Activated CD4-positive, alpha-beta T cell treated with anti-CD3 and anti-CD28 coated beads, Interleukin-2, amount 10 ng/mL, durations not matched to agents 24 days and 14 days (primary cell): ENCODE measurements at regions of chr2 and their contacts with region 1.

Region 1: GRCh38 chr2:203535078-203535783 is at the start of gene RAPH1:
- DNase-seq: peak; percentile 88
- H3K4me3 Mint-ChIP-seq: peak within 1 kb of the TSS; percentile 87
- H3K27ac Mint-ChIP-seq: peak within 1 kb of the TSS; percentile 91
- H3K4me1 Mint-ChIP-seq: peaks cover 28% of the 10 kb centered on the region
- H3K27me3 Mint-ChIP-seq: peaks cover 57% of the 10 kb centered on the region
- total RNA-seq, gene RAPH1: 6.0 and 6.1 TPM in 2 replicates

Region 2: DNA sequence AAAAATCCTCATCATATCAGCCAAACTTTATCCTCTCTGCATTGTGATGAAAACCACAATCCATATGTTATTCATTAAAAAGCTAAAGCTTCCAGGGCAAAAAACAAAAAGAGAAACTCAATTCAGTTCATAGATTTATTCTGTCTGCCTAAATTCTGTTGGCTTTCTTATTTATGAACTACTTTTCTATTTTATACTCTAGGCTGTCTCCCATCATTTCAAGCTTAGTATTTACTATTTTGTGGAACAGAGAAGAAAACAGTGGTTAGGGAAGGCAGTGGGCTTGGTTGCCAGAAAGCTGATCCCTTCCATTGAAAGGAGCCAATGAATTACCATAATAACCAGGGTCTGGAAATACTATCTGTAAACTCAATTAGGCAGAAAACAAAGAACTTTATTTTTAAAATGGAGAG is 72.0 kb before region 1 on chr2:
- intact Hi-C with region 1: no loop called
- DNase-seq: no peak
- H3K4me3 Mint-ChIP-seq: no peak overlapping the region
- H3K27ac Mint-ChIP-seq: no peak overlapping the region
- H3K4me1 Mint-ChIP-seq: no peaks in the 10 kb centered on the region
- H3K27me3 Mint-ChIP-seq: peaks cover 2% of the 10 kb centered on the region

Region 3: GRCh38 chr2:203492965-203493364 is 42.3 kb before region 1 on chr2:
- intact Hi-C with region 1: loop called (anchors 5 kb)
- DNase-seq: peak; percentile 41
- H3K4me3 Mint-ChIP-seq: no peak overlapping the region
- H3K27ac Mint-ChIP-seq: no peak overlapping the region
- H3K4me1 Mint-ChIP-seq: peaks cover 7% of the 10 kb centered on the region
- H3K27me3 Mint-ChIP-seq: no peaks in the 10 kb centered on the region

Region 4: DNA sequence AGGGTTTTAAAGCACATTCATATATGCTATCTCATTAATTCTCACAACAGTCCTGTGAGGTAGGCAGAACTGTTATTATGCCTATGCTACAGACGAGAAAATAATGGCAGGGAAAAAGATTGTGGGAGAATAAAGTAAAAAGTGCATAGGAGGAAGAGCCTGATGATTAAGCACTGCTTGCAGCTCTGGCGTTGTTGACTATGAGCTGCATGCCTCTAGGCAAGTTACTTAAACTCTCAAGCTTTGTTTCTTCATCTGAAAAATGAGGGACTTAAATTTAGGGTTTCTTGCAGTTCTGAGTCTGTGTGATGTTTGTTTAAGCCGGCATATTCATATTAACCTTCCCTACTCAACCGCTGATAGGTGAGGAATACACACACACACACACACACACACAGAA is 51.5 kb after region 1 on chr2:
- intact Hi-C with region 1: no loop called
- DNase-seq: no peak
- H3K4me3 Mint-ChIP-seq: no peak overlapping the region
- H3K27ac Mint-ChIP-seq: no peak overlapping the region
- H3K4me1 Mint-ChIP-seq: peaks cover 16% of the 10 kb centered on the region
- H3K27me3 Mint-ChIP-seq: peaks cover 54% of the 10 kb centered on the region

Region 5: DNA sequence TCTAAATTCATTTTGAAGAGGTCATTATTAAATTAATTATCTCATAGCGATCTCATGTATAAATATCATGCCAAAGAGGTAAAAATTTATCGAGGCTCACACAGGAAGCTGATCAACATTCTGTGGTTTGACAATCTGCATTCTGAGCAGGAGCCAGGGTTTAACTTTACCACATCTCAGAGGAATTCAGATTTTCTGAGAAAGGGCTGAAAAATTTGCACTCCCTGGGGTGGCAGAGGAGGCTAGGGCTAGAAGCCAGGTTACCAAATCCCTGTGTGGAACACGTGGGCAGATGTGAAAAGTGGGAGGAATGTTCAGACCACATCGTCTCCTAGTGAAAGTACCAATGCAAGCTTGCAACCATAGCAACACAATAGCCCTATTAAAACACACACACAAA is 268.8 kb after region 1 on chr2:
- intact Hi-C with region 1: loop called (anchors 5 kb)
- DNase-seq: peak; percentile 82
- H3K4me3 Mint-ChIP-seq: peak overlapping the region; percentile 40
- H3K27ac Mint-ChIP-seq: peak overlapping the region; percentile 84
- H3K4me1 Mint-ChIP-seq: peaks cover 60% of the 10 kb centered on the region
- H3K27me3 Mint-ChIP-seq: no peaks in the 10 kb centered on the region